ENCODE measurements at regions of chr1 and their contacts with region 1.

Region 1: GRCh38 chr1:156160743-156161171 is 7.4 kb downstream of the SEMA4A start:
- DNase-seq: peak; percentile 92 to 94 (median 92)
- ATAC-seq: peak; percentile 88 to 92 (median 90)
- H3K4me3 ChIP-seq: peak overlapping the region in 11 of 12 donors; percentile 39 to 71 (median 57)
- H3K27ac ChIP-seq: peak overlapping the region; percentile 11 to 94 (median 86)
- H3K4me1 ChIP-seq: peaks cover 3 to 54% (median 21%) of the 10 kb centered on the region in 12 donors
- H3K27me3 ChIP-seq: no peaks in the 10 kb centered on the region
- CTCF ChIP-seq: no peak
- POLR2A ChIP-seq: no peak

Region 2: GRCh38 chr1:156193488-156194299 is 32.9 kb after region 1 on chr1 and contains the start of gene SLC25A44:
- intact Hi-C with region 1: loop called in 2 of 10 experiments (anchors 2 to 5 kb)
- DNase-seq: peak; percentile 96 to 97 (median 97)
- ATAC-seq: peak; percentile 99 to 100 (median 100)
- H3K4me3 ChIP-seq: peak within 1 kb of the TSS; percentile 59 to 99 (median 82)
- H3K27ac ChIP-seq: peak within 1 kb of the TSS in 11 of 12 donors; percentile 74 to 92 (median 88)
- H3K4me1 ChIP-seq: peaks cover 0 to 51% (median 27%) of the 10 kb centered on the region in 12 donors
- H3K27me3 ChIP-seq: no peaks in the 10 kb centered on the region
- CTCF ChIP-seq: peak; percentile 35 to 82 (median 66)
- POLR2A ChIP-seq: peak in 1 of 2 donors; percentile 71
- total RNA-seq, gene SLC25A44: 16.4 to 27.4 (median 20.5) TPM

Region 3: DNA sequence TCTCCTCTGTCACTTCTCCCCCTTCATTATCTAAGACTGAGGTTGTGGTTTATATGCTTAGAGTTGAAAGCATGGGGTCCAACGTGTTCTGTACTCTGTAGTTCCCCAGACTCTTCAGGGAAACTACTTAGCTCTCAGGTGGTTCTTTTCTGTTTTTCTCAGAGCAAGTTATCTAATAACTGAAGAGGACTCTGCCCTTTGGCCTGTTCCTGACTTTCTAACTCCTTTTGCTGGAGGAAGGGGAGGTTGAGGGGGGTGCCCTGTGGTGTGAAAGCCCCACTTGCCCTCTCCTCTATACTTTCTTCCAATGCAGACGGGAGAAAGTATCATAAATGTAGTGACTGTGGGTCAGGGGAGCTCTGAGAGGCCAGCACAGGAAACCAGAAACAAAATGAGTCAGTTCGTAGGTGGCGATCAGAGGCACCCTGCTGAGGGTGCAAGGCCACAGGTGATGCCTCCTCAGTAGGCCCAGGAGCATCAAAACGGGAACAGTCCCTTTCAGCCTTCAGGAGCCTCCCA is 38.1 kb after region 1 on chr1:
- intact Hi-C with region 1: loop called in 1 of 10 experiments (anchors 5 kb)
- DNase-seq: no peak
- ATAC-seq: no peak
- H3K4me3 ChIP-seq: no peak overlapping the region
- H3K27ac ChIP-seq: no peak overlapping the region
- H3K4me1 ChIP-seq: peaks cover 0 to 71% (median 41%) of the 10 kb centered on the region in 12 donors
- H3K27me3 ChIP-seq: no peaks in the 10 kb centered on the region
- CTCF ChIP-seq: no peak
- POLR2A ChIP-seq: no peak

Region 4: GRCh38 chr1:156212833-156213643 is 52.3 kb after region 1 on chr1 and contains the start of gene PMF1:
- intact Hi-C with region 1: loop called in 3 of 10 experiments (anchors 5 kb)
- DNase-seq: peak; percentile 97 to 99 (median 98)
- ATAC-seq: peak; percentile 98 to 99 (median 98)
- H3K4me3 ChIP-seq: peak within 1 kb of the TSS; percentile 45 to 84 (median 68)
- H3K27ac ChIP-seq: peak within 1 kb of the TSS; percentile 89 to 99 (median 96)
- H3K4me1 ChIP-seq: peaks cover 0 to 33% (median 20%) of the 10 kb centered on the region in 12 donors
- H3K27me3 ChIP-seq: no peaks in the 10 kb centered on the region
- CTCF ChIP-seq: peak in 1 of 12 donors; percentile 18
- POLR2A ChIP-seq: peak in 1 of 2 donors; percentile 82
- total RNA-seq, gene PMF1: 57.8 to 116 (median 62.4) TPM

Measured in heart left ventricle (tissue), 16 donors.